ENCODE measurements at regions of chr11 and their contacts with region 1.

Region 1: DNA sequence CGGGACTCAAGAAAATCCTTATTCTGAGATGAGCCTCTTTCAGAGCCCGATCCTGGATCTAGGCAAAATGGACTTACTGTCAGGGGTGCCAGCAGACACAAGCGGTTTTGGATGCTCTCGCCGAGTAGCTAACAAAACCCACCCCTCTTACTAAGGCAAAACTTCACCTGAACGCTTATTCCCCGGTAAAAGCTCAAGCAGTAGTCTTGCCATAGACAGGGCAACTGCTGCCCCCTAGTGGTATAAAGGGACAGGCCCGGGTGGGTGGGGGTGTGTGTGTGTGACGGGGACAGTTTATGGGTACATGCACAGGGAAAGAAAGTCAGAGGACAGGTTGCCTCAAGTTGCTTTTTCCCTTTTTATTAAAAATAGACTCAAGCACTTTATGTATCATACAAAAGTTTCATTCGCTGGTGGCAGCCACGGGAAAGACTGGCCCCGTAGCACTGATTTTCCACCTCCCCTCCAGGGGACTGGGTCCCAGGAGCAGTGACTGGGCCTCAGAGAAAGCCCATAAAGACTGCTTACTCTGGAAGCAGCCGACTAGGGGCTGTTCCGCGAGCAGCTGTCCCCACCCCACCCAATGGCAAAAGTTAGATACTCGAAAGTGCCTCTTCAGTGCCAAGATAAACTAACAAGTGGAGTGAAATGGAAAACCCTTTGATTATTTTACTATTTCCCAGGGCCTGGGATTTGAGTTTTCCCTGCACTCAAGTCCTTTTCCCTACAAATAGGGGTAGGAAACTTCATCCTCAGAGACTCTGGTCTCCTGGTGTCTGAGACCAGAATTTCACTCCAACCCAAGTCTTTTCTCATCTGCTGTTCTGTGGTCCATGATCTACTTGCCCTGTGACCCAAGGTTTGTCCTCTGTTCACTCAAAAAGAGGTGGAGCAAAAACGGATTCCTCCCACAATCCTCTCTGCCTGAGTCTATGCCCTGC is 4.7 kb downstream of the YPEL4 start:
- DNase-seq: peak; percentile 96
- ATAC-seq: peak; percentile 32
- H3K4me3 Mint-ChIP-seq: peak overlapping the region; percentile 80
- H3K27ac Mint-ChIP-seq: peak overlapping the region; percentile 92
- H3K4me1 Mint-ChIP-seq: peaks cover 94% of the 10 kb centered on the region
- H3K27me3 Mint-ChIP-seq: peaks cover 14% of the 10 kb centered on the region
- CTCF ChIP-seq: peak; percentile 92

Region 2: GRCh38 chr11:57493507-57494503 is 151.2 kb before region 1 on chr11:
- CTCF ChIA-PET with region 1: interaction called, 51 read pairs
- POLR2A ChIA-PET with region 1: interaction called, 25 read pairs
- DNase-seq: peak; percentile 95
- ATAC-seq: peak; percentile 83
- H3K4me3 Mint-ChIP-seq: no peak overlapping the region
- H3K27ac Mint-ChIP-seq: peak overlapping the region; percentile 96
- H3K4me1 Mint-ChIP-seq: peaks cover 15% of the 10 kb centered on the region
- H3K27me3 Mint-ChIP-seq: no peaks in the 10 kb centered on the region; the same call in 1 of the 2 replicates
- CTCF ChIP-seq: peak; percentile 93

Region 3: DNA sequence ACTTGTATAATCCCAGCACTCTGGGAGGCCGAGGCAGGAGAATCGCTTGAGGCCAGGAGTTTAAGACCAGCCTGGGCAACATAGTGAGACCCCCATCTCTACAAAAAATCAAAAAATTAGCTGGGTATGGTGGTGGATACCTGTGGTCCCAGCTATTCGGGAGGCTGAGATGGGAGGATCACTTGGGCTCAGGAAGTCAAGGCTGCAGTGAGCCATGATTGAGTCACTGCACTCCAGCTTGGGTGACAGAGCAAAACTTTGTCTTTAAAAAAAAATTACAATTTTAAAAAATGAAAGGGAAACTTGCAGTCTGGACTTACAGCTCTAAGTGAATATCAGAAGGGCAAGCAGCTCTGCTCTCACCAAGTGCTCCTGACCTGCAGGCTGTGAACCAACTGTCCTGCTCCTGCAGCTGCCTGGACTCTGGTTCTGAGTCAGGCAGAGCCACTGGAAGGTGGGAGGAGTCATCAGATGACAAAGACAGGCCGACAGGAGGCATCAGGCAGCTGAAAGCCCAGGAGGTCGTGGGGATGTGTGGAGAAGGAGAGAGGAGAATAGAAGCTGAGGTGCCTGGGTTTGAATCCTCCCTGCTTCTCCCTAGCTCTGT is 98.0 kb before region 1 on chr11:
- CTCF ChIA-PET with region 1: interaction called, 12 read pairs
- POLR2A ChIA-PET with region 1: interaction called, 5 read pairs
- DNase-seq: peak; percentile 39
- ATAC-seq: peak; percentile 72
- H3K4me3 Mint-ChIP-seq: no peak overlapping the region
- H3K27ac Mint-ChIP-seq: peak overlapping the region; percentile 70; the same call in 1 of the 2 replicates
- H3K4me1 Mint-ChIP-seq: peaks cover 20% of the 10 kb centered on the region
- H3K27me3 Mint-ChIP-seq: no peaks in the 10 kb centered on the region; the same call in 1 of the 2 replicates
- CTCF ChIP-seq: no peak

Region 4: DNA sequence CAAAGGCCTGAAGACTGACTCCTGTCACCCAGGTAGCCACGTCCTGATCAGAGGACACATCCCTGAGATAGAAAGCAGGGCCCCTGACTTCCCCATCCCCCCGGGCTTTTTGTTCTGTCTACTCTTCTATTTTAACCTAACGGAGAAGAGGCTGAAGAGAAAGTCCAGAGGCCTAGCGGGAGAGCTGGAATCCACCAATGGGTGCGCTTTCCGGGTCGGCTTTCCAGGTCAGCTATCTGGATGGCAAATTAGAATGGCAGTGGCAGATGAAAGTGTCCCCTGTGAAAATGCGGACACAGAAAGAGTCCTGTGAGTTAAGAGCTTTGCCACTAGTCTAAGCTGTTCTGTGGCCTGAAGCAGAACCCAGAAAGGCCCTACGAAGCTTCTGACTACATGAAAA is 60.7 kb before region 1 on chr11:
- CTCF ChIA-PET with region 1: interaction called, 15 read pairs
- POLR2A ChIA-PET with region 1: interaction called, 6 read pairs
- DNase-seq: no peak
- ATAC-seq: no peak; the same call in 1 of the 2 replicates
- H3K4me3 Mint-ChIP-seq: no peak overlapping the region
- H3K27ac Mint-ChIP-seq: no peak overlapping the region
- H3K4me1 Mint-ChIP-seq: peaks cover 11% of the 10 kb centered on the region
- H3K27me3 Mint-ChIP-seq: peaks cover 1% of the 10 kb centered on the region
- CTCF ChIP-seq: no peak

Region 5: DNA sequence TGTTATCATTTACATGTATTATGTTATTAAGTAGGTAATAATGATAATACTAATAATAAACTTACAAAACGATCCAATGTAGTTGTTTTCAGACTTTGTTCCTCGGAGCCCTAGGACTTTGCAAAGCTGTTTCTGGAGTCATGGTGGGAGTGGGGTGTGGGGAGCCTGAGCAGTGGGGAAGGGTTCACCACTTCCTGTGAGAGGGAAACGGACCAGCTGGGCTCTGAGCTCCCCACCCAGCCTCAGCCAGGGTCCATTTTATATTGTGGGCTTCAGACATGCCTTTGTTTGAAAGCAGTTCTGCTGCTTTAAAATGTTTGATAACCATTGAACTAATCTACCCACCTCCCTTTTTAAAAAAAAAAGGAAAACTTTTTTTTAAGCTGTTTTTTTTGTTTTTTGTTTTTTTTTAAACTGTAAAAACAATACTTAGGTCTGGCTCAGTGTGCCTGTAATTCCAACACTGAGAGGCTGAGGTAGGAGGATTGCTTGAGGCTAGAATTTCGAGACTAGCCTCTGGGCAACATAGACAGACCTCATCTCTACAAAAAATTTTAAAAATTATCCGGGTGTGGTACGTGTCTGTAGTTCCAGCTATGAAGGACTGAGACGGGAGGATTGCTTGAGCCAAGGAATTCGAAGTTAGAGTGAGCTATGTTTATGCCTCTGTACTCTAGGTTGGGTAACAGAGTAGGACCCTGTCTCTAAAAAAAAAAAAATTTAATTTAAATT is 40.6 kb before region 1 on chr11:
- CTCF ChIA-PET with region 1: interaction called, 78 read pairs
- POLR2A ChIA-PET with region 1: interaction called, 115 read pairs
- DNase-seq: no peak
- ATAC-seq: peak; percentile 32; the same call in 1 of the 2 replicates
- H3K4me3 Mint-ChIP-seq: no peak overlapping the region
- H3K27ac Mint-ChIP-seq: no peak overlapping the region
- H3K4me1 Mint-ChIP-seq: peaks cover 4% of the 10 kb centered on the region
- H3K27me3 Mint-ChIP-seq: no peaks in the 10 kb centered on the region
- CTCF ChIP-seq: no peak

Region 6: GRCh38 chr11:57630193-57630592 is 14.8 kb before region 1 on chr11:
- CTCF ChIA-PET with region 1: interaction called, 13 read pairs
- POLR2A ChIA-PET with region 1: interaction called, 6 read pairs
- DNase-seq: no peak
- ATAC-seq: no peak
- H3K4me3 Mint-ChIP-seq: no peak overlapping the region
- H3K27ac Mint-ChIP-seq: no peak overlapping the region
- H3K4me1 Mint-ChIP-seq: peaks cover 4% of the 10 kb centered on the region; the same call in 1 of the 2 replicates
- H3K27me3 Mint-ChIP-seq: peaks cover 29% of the 10 kb centered on the region
- CTCF ChIP-seq: no peak

Region 7: DNA sequence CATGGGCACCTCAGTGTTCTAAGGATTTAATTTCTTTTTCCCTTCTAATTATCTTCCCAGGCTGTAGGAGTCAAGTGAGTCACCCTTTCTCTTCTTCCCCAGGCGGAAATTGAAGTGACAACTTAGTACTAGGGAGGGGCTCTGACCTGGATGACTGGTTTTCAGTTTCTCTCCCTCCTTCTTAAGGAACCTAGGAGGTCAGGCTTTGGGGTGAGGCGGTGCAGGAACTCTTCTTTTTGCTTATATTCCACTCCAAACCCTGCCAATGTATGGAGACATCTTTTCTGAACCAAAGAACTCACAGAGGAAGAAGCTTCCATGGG is 35.5 kb after region 1 on chr11:
- CTCF ChIA-PET with region 1: no interaction called
- POLR2A ChIA-PET with region 1: no interaction called
- DNase-seq: no peak
- ATAC-seq: no peak
- H3K4me3 Mint-ChIP-seq: no peak overlapping the region
- H3K27ac Mint-ChIP-seq: peak overlapping the region; percentile 27; the same call in 1 of the 2 replicates
- H3K4me1 Mint-ChIP-seq: peaks cover 9% of the 10 kb centered on the region
- H3K27me3 Mint-ChIP-seq: no peaks in the 10 kb centered on the region
- CTCF ChIP-seq: no peak

Region 8: DNA sequence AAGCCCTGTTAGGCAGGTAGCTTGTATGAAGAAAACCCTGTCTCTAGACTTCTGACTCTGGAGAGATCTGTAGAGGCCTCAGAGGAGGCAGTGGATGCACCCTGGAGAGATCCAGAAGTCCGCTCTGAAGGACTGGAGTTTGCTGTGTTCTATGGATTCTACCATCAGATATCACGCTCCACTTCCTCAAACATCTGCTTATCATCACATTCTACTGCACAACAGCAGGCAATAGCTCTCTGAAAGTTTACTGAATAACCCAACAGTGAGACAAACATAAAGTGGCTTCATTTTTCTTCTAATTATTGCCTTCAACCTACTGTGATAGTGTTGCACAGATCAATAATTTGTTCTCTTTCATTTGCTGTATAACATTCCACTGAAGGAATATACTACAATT is 319.6 kb after region 1 on chr11:
- CTCF ChIA-PET with region 1: no interaction called
- POLR2A ChIA-PET with region 1: no interaction called
- DNase-seq: no peak
- ATAC-seq: no peak
- H3K4me3 Mint-ChIP-seq: no peak overlapping the region
- H3K27ac Mint-ChIP-seq: no peak overlapping the region
- H3K4me1 Mint-ChIP-seq: no peaks in the 10 kb centered on the region
- H3K27me3 Mint-ChIP-seq: no peaks in the 10 kb centered on the region
- CTCF ChIP-seq: no peak

Measured in WTC11 (cell line).